PC-3 (cell line): ENCODE measurements at regions of chr12 and their contacts with region 1.

Region 1: DNA sequence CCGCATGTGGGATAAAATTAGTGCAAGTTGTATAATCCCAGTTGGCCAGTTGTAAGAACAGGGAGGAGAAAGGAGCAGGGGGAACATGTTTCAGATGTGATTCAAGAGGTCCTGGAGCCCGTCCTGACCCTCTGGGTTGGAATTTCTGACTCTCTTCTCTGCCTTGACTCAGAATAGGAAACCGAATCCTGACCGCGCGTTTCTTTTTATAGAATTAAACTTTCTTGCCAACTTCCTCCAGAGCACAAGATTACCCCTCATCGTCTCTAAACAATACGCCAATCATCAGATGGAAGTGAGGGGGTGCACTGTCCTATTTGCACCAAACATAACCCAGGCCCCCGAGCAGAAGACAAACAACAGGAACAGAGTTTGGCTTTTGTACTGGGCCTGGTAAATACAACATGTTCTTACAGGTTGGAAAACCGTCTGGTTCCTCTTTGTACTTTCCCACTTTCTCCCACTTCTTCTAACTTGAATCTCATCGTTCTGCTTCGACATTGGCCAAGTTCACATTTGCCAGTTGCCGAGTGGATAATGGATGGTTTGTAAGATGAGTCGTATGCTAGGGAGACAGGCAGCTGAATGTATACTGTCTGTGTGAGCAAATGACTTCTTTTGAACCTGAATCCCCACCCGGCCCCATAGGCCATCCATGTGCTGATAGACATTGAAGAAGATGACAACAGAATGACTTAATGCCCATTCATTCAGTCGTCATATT is 42.6 kb upstream of the MED13L start:
- DNase-seq: peak; percentile 88
- ATAC-seq: peak; percentile 51
- H3K4me3 ChIP-seq: peak overlapping the region; percentile 47
- H3K27ac ChIP-seq: peak overlapping the region; percentile 96
- H3K4me1 ChIP-seq: peaks cover 40% of the 10 kb centered on the region
- H3K27me3 ChIP-seq: no peaks in the 10 kb centered on the region
- CTCF ChIP-seq: no peak

Region 2: DNA sequence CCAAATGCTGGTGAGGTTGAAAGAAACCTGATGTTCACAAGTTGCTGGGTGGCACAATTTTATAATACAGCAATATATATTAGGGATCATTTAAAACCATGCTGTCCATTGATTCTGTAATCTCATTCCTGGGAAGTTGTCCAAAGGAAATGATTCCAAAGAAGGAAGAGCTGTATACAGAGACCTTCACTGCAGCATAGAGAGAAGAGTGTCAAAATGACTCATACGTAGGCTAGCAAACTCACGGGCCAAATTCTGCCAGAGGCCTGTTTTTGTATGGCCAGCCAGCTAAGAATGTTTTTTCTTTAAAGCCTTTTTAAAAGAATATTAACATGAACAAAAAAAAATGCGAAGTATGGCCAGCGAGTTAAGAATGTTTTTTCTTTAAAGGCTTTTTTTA is 26.7 kb after region 1 on chr12:
- CTCF ChIA-PET with region 1: no interaction called
- POLR2A ChIA-PET with region 1: no interaction called
- intact Hi-C with region 1: loop called (anchors 1 kb)
- DNase-seq: peak; percentile 81
- ATAC-seq: peak; percentile 99
- H3K4me3 ChIP-seq: no peak overlapping the region
- H3K27ac ChIP-seq: no peak overlapping the region
- H3K4me1 ChIP-seq: peaks cover 9% of the 10 kb centered on the region
- H3K27me3 ChIP-seq: no peaks in the 10 kb centered on the region
- CTCF ChIP-seq: no peak

Region 3: GRCh38 chr12:116376354-116377193 is 56.5 kb after region 1 on chr12:
- CTCF ChIA-PET with region 1: no interaction called
- POLR2A ChIA-PET with region 1: no interaction called
- intact Hi-C with region 1: loop called (anchors 2 kb)
- DNase-seq: peak; percentile 96
- ATAC-seq: peak; percentile 65
- H3K4me3 ChIP-seq: peak overlapping the region; percentile 47
- H3K27ac ChIP-seq: peak overlapping the region; percentile 87
- H3K4me1 ChIP-seq: peaks cover 30% of the 10 kb centered on the region
- H3K27me3 ChIP-seq: no peaks in the 10 kb centered on the region
- CTCF ChIP-seq: no peak

Region 4: DNA sequence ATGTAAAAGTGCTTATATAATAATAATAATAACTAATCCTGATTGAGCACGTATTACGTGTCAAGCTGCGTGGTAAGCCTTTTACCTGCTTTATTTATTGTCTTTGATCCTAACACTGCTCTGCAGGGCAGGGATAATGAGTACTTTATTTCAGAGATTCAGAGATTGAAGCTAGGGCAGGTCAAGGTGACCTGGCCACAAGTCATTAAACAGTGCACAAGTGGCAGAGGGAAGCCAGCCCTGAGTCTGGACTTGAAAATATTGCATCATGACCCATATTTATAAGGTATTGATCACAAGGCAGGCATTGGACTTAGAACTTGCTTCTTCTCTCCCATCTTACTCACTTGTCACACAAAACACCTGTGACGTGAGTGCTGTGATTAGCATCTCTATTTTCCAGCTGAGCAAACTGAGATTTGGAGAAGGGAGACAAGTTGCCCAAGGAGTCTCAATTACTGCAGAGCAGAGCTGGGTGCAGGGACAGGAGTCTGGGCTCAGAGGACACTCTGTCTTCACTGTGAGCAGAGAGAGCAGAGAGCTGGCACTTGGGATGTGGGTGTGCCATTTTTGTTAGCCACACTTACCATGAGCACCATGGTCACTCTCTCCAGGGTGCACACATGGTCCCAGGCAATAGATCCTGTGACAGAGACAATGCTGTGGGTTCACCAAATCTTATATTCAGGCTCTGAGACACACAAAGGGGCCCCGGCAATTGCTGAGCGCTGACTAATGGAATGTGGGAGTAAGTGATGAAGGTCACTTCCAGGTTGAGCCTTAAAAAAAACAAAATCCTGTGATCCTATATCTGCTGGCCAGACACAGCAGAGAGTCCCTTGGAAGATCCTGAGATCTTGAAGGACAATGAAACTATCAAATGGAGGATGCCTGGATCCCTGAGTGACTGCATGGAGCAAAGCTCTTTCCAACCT is 70.6 kb after region 1 on chr12:
- CTCF ChIA-PET with region 1: no interaction called
- POLR2A ChIA-PET with region 1: no interaction called
- intact Hi-C with region 1: no loop called
- DNase-seq: peak; percentile 87
- ATAC-seq: peak; percentile 22
- H3K4me3 ChIP-seq: no peak overlapping the region; the same call in none of the 2 replicates
- H3K27ac ChIP-seq: peak overlapping the region; percentile 95
- H3K4me1 ChIP-seq: peaks cover 34% of the 10 kb centered on the region
- H3K27me3 ChIP-seq: no peaks in the 10 kb centered on the region
- CTCF ChIP-seq: no peak